ENCODE measurements at regions of chr12 and their contacts with region 1.

Region 1: DNA sequence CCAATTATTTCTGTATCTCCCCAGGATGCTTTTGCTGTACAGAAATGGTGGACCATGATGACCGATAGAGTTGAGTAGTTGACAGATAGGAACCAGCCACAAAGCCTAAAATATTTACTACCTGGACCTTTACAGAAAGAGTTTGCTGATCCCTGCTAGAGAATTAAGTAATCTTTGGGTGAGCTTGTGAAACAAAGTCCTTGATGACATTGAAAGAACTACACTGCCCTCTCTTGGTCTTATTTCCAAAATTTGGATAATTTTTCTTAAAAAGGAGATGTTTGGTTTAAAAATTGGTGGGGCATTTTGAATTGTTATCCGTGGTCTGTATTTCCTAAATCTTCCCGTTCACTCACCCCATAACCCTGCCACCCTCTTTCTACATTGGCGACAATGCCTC is 13.7 kb upstream of the TCTN1 start:
- DNase-seq: peak; percentile 89
- ATAC-seq: peak; percentile 54
- H3K4me3 ChIP-seq: no peak overlapping the region
- H3K27ac ChIP-seq: no peak overlapping the region
- H3K4me1 ChIP-seq: no peaks in the 10 kb centered on the region
- H3K27me3 ChIP-seq: no peaks in the 10 kb centered on the region
- CTCF ChIP-seq: peak; percentile 85

Region 2: DNA sequence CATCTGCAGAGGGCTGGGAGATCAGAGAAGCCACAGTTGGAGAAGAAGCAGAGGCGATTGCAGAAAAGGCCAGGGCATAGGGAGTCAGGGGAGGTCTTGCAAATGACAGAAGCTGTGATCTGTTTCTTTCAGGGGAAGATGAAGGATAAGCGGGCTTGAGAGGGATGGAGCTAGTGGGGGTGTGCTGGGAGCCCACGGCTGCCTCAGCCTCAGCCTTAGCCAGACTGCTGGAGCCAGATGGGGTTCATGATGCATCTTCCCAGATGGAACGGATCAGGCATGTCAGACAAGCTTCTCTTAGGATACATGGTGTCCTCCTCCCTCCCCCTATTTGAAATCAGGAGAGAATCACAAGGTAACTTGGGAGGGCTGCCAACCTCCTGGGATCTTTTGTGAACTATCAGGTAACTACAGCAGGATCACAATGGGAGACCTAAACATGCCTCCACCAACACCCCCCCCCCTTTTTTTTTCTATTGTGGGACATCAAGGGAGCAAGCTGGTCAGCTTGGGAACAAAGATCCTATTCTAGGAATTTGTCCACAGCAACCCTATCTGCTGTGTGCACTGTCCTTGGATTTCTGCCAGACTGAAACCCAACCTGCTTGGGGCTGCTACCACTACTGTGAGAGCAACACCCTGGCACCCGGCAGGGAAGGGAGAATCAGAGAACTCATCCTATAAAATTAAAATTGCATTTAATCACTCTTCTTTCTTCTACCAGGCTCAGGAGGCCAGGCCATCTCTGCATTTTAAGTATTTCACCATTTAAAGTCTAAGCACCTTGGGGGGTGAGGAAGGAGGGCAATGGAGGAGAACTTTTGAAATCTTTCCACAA is 329.9 kb before region 1 on chr12:
- CTCF ChIA-PET with region 1: no interaction called
- POLR2A ChIA-PET with region 1: no interaction called
- intact Hi-C with region 1: no loop called
- DNase-seq: peak; percentile 92
- ATAC-seq: peak; percentile 65
- H3K4me3 ChIP-seq: peak overlapping the region; percentile 11; the same call in 1 of the 2 replicates
- H3K27ac ChIP-seq: peak overlapping the region; percentile 85
- H3K4me1 ChIP-seq: peaks cover 50% of the 10 kb centered on the region
- H3K27me3 ChIP-seq: no peaks in the 10 kb centered on the region
- CTCF ChIP-seq: no peak

Region 3: DNA sequence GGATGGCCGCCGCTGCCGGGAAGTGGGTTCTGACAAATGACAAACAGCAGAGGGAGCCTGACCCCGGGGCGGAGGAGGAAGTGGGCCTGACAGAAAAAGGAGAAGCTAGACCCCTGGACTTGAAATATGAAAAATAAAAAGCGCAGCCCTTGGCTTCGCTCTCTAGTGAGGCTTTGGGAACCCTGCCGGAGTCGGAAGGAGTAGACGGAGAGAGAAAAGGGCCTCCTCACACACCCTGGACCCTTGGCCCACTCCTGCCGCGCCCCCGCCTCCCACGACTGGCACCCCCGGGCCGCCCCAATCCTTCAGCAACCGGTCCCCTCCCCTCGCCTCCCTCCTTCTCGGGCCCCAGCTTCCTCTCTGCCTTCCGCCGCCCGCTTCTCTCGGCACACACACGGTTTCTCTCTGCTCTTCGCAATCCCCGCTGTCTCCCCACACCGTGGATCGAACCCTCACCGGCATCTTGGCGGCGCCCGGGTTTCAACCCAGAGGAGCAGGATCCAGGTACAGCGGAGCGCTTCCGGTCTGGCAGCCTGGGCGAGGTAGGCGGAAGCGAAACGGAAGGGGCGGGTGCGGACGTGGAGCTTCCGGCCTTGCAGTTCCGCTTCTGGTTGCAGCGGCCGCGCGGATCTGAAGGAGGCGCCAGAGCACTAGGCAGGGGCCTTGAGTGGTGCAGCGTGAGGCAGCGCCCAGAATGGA is 150.3 kb before region 1 on chr12 and contains the start of gene ARPC3:
- CTCF ChIA-PET with region 1: interaction called, 25 read pairs
- POLR2A ChIA-PET with region 1: interaction called, 4 read pairs
- intact Hi-C with region 1: loop called (anchors 1 kb)
- DNase-seq: peak; percentile 97
- ATAC-seq: peak; percentile 96
- H3K4me3 ChIP-seq: peak within 1 kb of the TSS; percentile 94
- H3K27ac ChIP-seq: peak within 1 kb of the TSS; percentile 75
- H3K4me1 ChIP-seq: 0 out of 2 replicates have a peak, but pooled peaks cover 5% of the 10 kb centered on the region
- H3K27me3 ChIP-seq: no peaks in the 10 kb centered on the region
- CTCF ChIP-seq: peak; percentile 82
- total RNA-seq, gene ARPC3: 202 and 292 TPM in 2 replicates

Region 4: GRCh38 chr12:110508071-110508586 is 92.1 kb before region 1 on chr12:
- CTCF ChIA-PET with region 1: interaction called, 16 read pairs
- POLR2A ChIA-PET with region 1: no interaction called
- intact Hi-C with region 1: loop called (anchors 1 kb)
- DNase-seq: no peak
- ATAC-seq: no peak
- H3K4me3 ChIP-seq: no peak overlapping the region
- H3K27ac ChIP-seq: no peak overlapping the region
- H3K4me1 ChIP-seq: peaks cover 3% of the 10 kb centered on the region; the same call in 1 of the 2 replicates
- H3K27me3 ChIP-seq: no peaks in the 10 kb centered on the region
- CTCF ChIP-seq: no peak

Region 5: GRCh38 chr12:110546339-110546738 is 53.9 kb before region 1 on chr12:
- CTCF ChIA-PET with region 1: interaction called, 14 read pairs
- POLR2A ChIA-PET with region 1: interaction called, 9 read pairs
- intact Hi-C with region 1: no loop called
- DNase-seq: peak; percentile 97
- ATAC-seq: peak; percentile 76
- H3K4me3 ChIP-seq: peak overlapping the region; percentile 32; the same call in 1 of the 2 replicates
- H3K27ac ChIP-seq: peak overlapping the region; percentile 92
- H3K4me1 ChIP-seq: peaks cover 27% of the 10 kb centered on the region
- H3K27me3 ChIP-seq: no peaks in the 10 kb centered on the region
- CTCF ChIP-seq: no peak

Region 6: DNA sequence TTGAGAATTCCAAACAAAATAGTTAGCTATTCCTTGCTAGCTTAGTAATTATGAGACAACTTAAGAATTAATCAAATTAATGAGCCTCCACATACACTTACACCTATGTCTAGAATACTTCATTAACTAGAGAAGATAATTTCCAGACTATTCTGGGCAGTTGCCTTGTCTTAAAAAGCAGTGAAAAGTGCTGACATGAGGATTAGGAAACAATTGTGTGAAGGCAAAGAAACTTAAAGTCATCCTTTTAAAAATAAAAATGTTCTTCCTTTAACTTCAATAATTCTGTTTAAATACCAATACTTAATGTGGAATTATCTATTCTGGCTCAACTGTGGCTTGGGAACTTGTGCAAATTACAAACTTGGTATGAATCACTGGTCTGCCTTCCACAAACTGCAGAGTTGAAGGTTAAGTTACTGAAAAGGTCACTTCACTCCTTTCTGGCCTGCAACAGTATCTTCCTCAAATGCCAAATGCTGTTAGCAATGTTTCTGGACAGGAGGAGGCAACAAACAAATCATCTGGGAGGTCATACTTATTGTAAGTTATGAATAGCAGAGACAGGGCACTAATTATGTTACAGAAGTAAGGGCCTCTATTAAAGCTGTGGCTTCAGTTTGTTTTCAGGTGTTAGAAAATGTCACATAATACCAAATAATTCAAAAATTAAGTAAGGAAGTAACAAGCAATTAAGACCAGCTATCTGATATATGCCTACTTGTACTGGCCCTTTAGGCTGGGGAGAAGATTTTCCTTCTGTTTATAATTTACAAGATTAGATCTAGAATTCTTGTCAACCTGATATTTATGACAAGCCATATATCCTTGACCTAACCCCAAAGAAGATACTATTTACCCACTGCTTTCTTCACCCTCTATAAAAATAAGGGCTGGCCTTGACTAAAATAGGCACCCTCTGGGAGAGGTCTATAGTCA is 36.3 kb before region 1 on chr12:
- CTCF ChIA-PET with region 1: interaction called, 20 read pairs
- POLR2A ChIA-PET with region 1: interaction called, 3 read pairs
- intact Hi-C with region 1: no loop called
- DNase-seq: peak; percentile 19
- ATAC-seq: no peak
- H3K4me3 ChIP-seq: no peak overlapping the region
- H3K27ac ChIP-seq: 0 out of 2 replicates have a peak overlapping the region, but pooled peaks have one; percentile 0
- H3K4me1 ChIP-seq: peaks cover 46% of the 10 kb centered on the region
- H3K27me3 ChIP-seq: no peaks in the 10 kb centered on the region
- CTCF ChIP-seq: no peak

Region 7: DNA sequence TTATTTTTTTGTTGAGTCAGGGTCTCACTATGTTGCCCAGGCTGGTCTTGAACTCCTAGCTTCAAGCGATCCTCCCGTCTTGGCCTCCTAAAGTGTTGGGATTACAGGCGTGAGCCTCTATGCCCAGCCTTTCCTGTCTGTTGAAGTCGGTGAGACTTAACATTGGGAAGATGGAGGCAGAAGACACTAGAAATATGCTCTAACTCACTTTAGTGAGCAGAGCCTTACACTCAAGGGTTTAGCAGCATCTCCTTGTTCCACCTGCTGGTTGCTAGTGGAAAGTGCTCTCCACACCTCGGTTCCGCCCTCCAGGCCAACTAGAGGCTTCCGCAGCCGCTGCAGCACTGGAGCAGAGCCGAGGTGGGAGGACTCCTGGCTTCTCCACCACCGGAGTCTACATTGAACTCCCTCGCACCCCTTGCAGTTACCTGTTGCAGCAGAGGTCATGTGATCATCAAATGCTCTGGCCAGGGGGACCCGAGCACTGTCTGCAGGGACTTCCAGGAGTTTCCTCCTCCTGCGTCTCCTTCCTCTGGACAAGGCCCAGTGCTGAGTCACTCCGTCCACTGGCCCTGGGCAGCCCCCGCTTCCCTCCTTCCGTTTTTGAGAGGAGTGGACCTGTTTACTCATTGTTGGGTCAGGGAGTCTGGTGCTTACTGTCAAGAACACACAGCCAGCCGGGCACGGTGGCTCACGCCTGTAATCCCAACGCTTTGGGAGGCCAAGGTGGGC is 98.1 kb after region 1 on chr12:
- CTCF ChIA-PET with region 1: no interaction called
- POLR2A ChIA-PET with region 1: no interaction called
- intact Hi-C with region 1: no loop called
- DNase-seq: peak; percentile 97
- ATAC-seq: peak; percentile 94
- H3K4me3 ChIP-seq: peak overlapping the region; percentile 12; the same call in 1 of the 2 replicates
- H3K27ac ChIP-seq: peak overlapping the region; percentile 65
- H3K4me1 ChIP-seq: 0 out of 2 replicates have a peak, but pooled peaks cover 6% of the 10 kb centered on the region
- H3K27me3 ChIP-seq: no peaks in the 10 kb centered on the region
- CTCF ChIP-seq: peak; percentile 80

Region 8: GRCh38 chr12:110888256-110888991 is 288.2 kb after region 1 on chr12:
- CTCF ChIA-PET with region 1: no interaction called
- POLR2A ChIA-PET with region 1: interaction called, 15 read pairs
- intact Hi-C with region 1: loop called (anchors 5 kb)
- DNase-seq: no peak
- ATAC-seq: no peak
- H3K4me3 ChIP-seq: peak overlapping the region; percentile 84; the same call in 1 of the 2 replicates
- H3K27ac ChIP-seq: no peak overlapping the region
- H3K4me1 ChIP-seq: peaks cover 8% of the 10 kb centered on the region; the same call in 1 of the 2 replicates
- H3K27me3 ChIP-seq: no peaks in the 10 kb centered on the region
- CTCF ChIP-seq: no peak; the same call in 1 of the 2 replicates

Measured in PC-3 (cell line).